ENCODE measurements at regions of chr5 and their contacts with region 1.

Region 1: DNA sequence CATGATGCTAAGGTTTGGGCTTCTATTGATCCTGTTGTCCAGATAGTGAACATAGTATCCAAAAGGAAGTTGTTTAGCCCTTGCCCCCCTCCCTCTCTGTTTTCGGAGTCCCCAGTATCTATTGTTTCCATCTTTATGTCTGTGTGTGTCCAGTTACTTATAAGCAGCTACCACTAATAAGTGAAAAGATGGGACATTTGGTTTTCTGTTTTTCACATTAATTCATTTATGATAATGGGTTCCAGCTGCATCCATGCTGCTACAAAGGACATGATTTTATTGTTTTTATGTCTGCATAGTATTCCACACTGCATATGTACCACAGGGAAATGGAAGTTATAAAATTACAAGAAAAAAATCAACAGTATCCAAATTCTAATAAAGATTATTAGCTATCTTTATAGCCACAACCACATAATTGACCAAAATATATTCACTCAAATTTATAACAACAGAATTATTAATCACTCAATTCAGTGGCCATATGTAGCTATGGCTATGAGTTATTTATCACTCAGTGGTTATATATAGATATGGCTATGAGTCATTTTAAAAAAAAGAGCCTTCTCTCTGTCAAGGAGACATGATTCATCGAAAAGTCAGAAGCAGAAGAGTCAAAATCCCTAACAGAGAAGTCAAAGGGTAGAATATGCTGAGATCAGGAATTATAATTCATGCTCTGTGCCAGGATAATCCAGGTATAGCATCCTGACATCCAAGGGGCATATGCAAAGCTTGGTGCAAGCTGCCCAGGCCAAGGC is 367.5 kb downstream of the DEPDC1B start:
- DNase-seq: no peak

Region 2: GRCh38 chr5:60274747-60275146 is 57.7 kb before region 1 on chr5:
- intact Hi-C with region 1: loop called in 1 of 2 experiments (anchors 5 kb)
- DNase-seq: no peak

Region 3: GRCh38 chr5:60366489-60366888 is 34.1 kb after region 1 on chr5:
- intact Hi-C with region 1: loop called in 1 of 2 experiments (anchors 5 kb)
- DNase-seq: no peak

Region 4: DNA sequence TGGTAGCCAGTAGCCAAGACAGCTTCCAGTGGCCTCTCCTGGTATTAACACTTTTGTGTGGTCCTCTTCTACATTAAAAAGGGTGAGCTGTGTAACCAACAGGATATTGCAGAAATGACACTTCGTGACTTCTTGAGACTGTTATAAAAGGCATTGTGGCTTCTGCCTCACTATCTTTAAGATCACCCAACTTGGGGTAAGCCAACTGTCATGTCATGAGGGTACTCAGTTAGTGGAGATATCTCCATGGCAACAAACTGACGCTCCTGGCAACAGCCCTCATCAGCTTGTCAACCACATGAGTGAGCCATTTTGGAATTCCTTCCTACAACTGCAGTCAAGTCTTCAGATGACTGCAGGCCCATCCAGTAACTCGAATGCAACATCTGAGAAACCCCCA is 245.9 kb after region 1 on chr5:
- intact Hi-C with region 1: no loop called
- DNase-seq: no peak